Activated CD4-positive, alpha-beta memory T cell treated with anti-CD3 and anti-CD28 coated beads for 36 hours (primary cell): ENCODE measurements at regions of chr1 and their contacts with region 1.

Region 1: DNA sequence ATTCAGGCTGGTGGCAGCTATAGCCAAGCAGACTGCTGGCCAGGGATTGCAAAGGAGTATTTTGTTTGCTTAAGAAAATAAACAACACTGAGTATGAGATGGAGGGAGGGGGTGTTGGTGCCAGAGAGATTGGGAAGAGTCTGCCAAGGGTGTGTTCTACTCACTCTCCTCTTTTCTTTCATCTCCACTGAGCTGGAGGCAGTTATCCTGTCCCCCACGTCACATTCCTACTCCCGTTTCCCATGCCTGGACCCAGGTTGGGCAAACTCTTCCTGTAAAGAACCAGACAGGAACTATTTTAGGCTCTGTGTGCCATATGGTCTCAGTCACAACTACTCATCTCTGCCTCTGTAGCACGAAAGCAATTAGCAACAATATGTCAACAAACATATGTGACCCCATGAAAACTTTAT is 1.4 kb upstream of the IL24 start:
- DNase-seq: no peak
- H3K4me3 Mint-ChIP-seq: no peak overlapping the region
- H3K27ac Mint-ChIP-seq: no peak overlapping the region
- H3K4me1 Mint-ChIP-seq: peaks cover 75% of the 10 kb centered on the region
- H3K27me3 Mint-ChIP-seq: peaks cover 4% of the 10 kb centered on the region

Region 2: DNA sequence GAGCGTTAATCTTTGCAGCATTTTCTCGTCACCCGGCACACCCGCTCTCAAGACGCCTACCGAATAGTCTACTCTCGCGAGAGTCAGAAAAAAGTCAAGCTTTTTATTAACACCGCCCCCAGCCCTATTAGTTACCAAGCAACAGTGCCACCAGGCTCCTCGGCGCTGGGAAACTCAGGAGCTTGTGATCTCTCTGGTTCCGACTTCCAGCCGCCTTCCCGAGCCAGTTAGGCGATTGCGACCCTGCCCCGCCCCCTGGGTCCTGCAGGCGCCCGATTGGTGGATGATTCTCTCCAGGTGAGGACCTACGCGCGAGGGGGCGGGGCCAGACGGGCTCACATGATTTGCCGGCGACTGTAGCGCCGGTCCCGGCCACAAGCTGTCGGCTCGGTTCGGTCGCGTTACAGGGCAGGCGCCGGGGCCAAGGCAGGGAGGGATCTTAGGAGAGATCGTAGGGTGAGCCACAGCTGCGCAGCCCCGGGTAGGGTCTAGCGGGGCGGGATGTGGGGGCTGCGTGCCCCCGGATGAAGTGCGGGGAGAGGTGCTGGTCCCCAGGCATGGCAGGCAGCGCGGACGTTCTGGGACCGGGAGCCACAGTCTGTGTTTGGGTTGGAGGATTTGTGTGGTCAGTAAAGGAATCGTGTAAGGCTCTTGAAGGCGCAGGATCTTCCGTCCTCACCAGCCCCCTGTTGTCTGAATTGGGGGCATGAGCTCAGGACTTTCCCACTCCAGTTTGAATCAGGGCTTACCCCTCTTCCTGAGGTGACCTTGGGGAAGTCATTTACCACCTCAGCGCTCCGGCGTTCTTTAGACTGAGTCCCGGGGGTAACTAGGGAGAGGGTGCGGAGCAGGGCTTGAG is 157.3 kb after region 1 on chr1 and contains the start of gene PFKFB2:
- CTCF ChIA-PET with region 1: no interaction called
- POLR2A ChIA-PET with region 1: no interaction called
- intact Hi-C with region 1: loop called (anchors 1 kb)
- DNase-seq: peak; percentile 95
- H3K4me3 Mint-ChIP-seq: peak within 1 kb of the TSS; percentile 93
- H3K27ac Mint-ChIP-seq: peak within 1 kb of the TSS; percentile 67
- H3K4me1 Mint-ChIP-seq: peaks cover 33% of the 10 kb centered on the region
- H3K27me3 Mint-ChIP-seq: no peaks in the 10 kb centered on the region
- total RNA-seq, gene PFKFB2: 2.1 to 2.5 TPM